Endothelial cell of umbilical vein (primary cell): ENCODE measurements at regions of chr6 and their contacts with region 1.

Region 1: DNA sequence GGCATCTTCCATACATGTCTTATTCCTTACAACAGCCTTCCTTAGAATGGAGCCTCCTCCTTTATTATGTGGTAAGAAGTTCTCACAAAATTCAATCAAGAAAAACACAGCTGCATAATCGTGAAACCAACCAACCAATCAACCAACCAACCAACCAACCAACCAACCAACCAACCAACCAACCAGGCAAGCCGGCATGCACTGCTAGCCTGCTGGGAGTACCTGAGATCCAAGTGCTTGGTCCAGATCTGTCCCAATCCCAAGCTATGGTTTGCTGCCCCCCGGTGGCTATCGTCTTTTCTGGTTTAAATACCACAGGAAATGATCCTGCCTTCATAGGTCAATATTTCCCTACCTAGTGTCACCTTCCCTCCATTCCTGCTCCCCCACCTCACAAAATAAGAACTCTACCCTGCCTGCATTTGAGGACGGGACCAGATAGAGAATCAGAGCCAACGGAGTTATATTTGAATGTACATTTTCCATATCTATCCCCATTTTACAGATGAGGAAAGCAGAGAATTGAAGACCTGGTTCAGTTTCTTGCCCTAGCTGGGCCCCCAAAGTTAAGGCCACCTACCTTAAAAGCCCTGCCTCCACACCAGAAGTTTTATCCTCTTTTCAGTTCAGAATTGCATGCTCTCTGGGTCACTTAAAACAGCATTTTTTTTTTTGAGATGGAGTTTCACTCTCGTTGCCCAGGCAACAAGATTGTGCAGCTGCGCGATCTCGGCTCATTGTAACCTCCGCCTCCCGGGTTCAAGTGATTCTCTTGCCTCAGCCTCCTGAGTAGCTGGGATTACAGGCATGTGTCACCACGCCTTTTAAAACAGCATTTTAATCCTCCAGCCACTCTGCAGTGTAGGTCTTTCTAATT is 27.1 kb downstream of the RAB44 start:
- DNase-seq: peak; percentile 73
- H3K4me3 ChIP-seq: no peak overlapping the region
- H3K27ac ChIP-seq: no peak overlapping the region
- H3K4me1 ChIP-seq: peaks cover 2% of the 10 kb centered on the region
- H3K27me3 ChIP-seq: no peaks in the 10 kb centered on the region
- CTCF ChIP-seq: peak; percentile 43 to 64
- POLR2A ChIP-seq: no peak

Region 2: DNA sequence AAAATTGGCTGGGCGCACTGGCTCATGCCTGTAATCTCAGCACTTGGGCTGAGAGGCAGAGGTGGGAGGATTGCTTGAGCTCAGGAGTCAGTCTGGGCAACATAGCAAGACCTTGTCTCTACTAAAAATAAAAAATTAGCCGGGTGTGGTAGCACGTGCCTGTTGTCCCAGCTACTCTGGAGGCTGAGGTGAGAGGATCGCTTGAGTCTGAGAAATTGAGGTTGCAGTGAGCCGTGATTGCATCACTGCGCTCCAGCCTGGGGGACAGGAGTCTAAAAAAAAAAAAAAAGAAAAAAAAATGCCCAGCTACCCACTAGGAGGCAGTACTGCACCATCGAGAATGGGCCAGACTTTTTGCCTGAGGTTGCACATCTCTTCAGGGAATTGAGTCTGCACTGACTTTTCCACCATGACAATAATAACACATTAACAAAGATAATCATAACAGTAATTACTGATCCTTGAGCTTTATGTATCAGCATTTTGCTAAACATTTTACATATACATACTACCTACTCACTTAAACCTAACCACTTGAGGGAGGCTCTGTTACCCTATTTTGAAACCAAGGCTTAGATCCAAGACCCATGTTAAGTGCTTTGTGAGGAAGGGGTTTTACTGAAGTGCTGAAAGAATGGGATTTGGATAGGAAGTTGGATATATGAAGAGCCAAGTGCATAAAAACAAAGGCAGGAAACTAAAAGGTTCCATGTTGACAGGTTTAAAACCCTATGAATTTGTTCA is 109.6 kb before region 1 on chr6:
- CTCF ChIA-PET with region 1: interaction called, 79 read pairs
- POLR2A ChIA-PET with region 1: no interaction called
- dilution Hi-C with region 1: no loop called
- intact Hi-C with region 1: loop called (anchors 1 kb)
- DNase-seq: peak; percentile 85
- H3K4me3 ChIP-seq: no peak overlapping the region
- H3K27ac ChIP-seq: no peak overlapping the region
- H3K4me1 ChIP-seq: peaks cover 17% of the 10 kb centered on the region
- H3K27me3 ChIP-seq: no peaks in the 10 kb centered on the region
- CTCF ChIP-seq: peak; percentile 65 to 74
- POLR2A ChIP-seq: no peak

Region 3: DNA sequence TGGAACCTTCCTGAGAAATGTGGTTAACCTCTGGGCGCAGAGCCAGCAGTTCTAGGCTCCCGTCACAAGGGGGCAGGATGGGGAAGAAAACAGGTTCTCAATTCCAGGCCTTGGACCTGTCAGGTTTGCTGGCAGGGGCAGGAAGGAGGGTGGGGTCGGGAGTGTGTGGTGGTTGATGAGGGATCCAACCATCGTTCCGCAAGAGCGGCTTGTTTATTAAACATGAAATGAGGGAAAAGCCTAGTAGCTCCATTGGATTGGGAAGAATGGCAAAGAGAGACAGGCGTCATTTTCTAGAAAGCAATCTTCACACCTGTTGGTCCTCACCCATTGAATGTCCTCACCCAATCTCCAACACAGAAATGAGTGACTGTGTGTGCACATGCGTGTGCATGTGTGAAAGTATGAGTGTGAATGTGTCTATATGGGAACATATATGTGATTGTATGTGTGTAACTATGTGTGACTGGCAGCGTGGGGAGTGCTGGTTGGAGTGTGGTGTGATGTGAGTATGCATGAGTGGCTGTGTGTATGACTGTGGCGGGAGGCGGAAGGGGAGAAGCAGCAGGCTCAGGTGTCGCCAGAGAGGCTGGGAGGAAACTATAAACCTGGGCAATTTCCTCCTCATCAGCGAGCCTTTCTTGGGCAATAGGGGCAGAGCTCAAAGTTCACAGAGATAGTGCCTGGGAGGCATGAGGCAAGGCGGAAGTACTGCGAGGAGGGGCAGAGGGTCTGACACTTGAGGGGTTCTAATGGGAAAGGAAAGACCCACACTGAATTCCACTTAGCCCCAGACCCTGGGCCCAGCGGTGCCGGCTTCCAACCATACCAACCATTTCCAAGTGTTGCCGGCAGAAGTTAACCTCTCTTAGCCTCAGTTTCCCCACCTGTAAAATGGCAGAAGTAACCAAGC is 100.9 kb before region 1 on chr6:
- CTCF ChIA-PET with region 1: interaction called, 9 read pairs
- POLR2A ChIA-PET with region 1: no interaction called
- dilution Hi-C with region 1: no loop called
- intact Hi-C with region 1: loop called (anchors 1 kb)
- DNase-seq: peak; percentile 84
- H3K4me3 ChIP-seq: no peak overlapping the region
- H3K27ac ChIP-seq: no peak overlapping the region
- H3K4me1 ChIP-seq: peaks cover 7% of the 10 kb centered on the region
- H3K27me3 ChIP-seq: no peaks in the 10 kb centered on the region
- CTCF ChIP-seq: peak; percentile 84 to 87
- POLR2A ChIP-seq: no peak

Region 4: DNA sequence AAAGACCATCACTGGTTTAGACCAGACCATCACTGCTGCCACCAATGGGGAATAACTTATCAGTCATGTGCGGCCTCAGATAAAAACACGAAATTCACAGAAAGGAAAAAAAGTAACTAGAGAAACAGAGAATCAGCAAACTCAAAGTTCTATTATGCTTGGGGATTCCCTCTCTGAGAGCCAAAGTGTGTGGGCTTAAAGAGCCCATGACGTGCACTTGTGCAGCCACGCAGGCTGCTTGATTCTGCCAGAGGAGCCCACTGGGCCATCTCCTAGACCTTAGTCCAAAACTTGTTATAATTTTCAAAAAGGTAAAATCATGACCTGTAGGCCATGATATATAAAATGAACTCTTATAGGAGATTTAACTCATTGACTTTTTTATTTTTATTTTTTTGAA is 11.9 kb before region 1 on chr6:
- CTCF ChIA-PET with region 1: interaction called, 17 read pairs
- POLR2A ChIA-PET with region 1: no interaction called
- dilution Hi-C with region 1: no loop called
- intact Hi-C with region 1: no loop called
- DNase-seq: no peak
- H3K4me3 ChIP-seq: no peak overlapping the region
- H3K27ac ChIP-seq: no peak overlapping the region
- H3K4me1 ChIP-seq: no peaks in the 10 kb centered on the region
- H3K27me3 ChIP-seq: peaks cover 0 to 1% of the 10 kb centered on the region in 2 experiments
- CTCF ChIP-seq: no peak
- POLR2A ChIP-seq: no peak

Region 5: GRCh38 chr6:36735110-36736071 is 10.6 kb after region 1 on chr6:
- CTCF ChIA-PET with region 1: interaction called, 16 read pairs
- POLR2A ChIA-PET with region 1: no interaction called
- dilution Hi-C with region 1: no loop called
- intact Hi-C with region 1: no loop called
- DNase-seq: peak; percentile 68
- H3K4me3 ChIP-seq: no peak overlapping the region
- H3K27ac ChIP-seq: no peak overlapping the region
- H3K4me1 ChIP-seq: peaks cover 31% of the 10 kb centered on the region
- H3K27me3 ChIP-seq: no peaks in the 10 kb centered on the region
- CTCF ChIP-seq: peak in 1 of 2 donors; percentile 27
- POLR2A ChIP-seq: no peak